Kidney (tissue), 22 donors: ENCODE measurements at regions of chr2 and their contacts with region 1.

Region 1: GRCh38 chr2:69717861-69718273 is 24.1 kb upstream of the ANXA4 start:
- DNase-seq: peak in 2 of 5 donors; percentile 21 to 45
- H3K4me3 ChIP-seq: no peak overlapping the region
- H3K27ac ChIP-seq: no peak overlapping the region
- H3K4me1 ChIP-seq: no peaks in the 10 kb centered on the region
- H3K27me3 ChIP-seq: no peaks in the 10 kb centered on the region
- CTCF ChIP-seq: no peak

Region 2: GRCh38 chr2:69499242-69499641 is 218.6 kb before region 1 on chr2:
- intact Hi-C with region 1: no loop called
- DNase-seq: no peak
- H3K4me3 ChIP-seq: no peak overlapping the region
- H3K27ac ChIP-seq: no peak overlapping the region
- H3K4me1 ChIP-seq: no peaks in the 10 kb centered on the region
- H3K27me3 ChIP-seq: no peaks in the 10 kb centered on the region
- CTCF ChIP-seq: no peak

Region 3: DNA sequence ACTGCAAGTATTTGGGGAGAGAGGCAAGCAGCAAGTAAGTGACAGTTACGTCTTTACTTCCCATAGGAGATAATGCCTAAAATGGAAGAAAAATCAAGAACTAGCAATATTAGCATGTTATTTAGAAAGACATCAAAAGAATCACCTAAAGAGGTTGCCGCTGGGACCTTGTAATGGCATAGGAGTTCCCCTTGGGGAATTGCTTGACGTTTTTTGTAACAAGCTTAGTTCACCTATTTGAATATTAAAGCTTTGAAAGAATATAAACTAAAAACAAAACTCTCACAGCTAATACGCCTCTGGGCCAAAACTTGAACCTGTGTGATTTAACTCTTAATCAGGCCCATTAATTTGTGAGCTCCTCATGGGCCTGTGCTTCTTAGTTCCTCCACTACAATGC is 163.3 kb before region 1 on chr2:
- intact Hi-C with region 1: no loop called
- DNase-seq: no peak
- H3K4me3 ChIP-seq: no peak overlapping the region
- H3K27ac ChIP-seq: no peak overlapping the region
- H3K4me1 ChIP-seq: peaks cover 0 to 15% (median 4%) of the 10 kb centered on the region in 3 donors
- H3K27me3 ChIP-seq: no peaks in the 10 kb centered on the region
- CTCF ChIP-seq: no peak

Region 4: DNA sequence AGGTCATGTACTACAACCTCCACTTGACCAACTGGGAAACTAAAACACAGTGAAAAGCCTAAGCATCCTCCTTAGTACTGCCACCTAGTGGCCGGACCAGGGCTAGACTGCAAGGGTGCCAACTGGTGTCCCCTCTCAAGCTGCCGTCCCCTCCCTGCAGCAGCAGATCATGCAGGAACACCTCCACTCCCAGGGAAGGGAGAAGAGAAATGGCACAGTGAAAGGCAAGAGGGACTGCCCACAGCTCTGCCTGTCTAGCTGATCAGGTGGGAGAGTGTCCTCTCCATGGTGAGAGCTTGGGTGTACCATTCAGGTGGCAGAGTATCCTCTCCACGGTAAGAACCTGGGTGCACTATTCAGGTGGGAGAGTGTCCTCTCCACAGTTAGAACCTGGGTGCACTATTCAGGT is 152.4 kb before region 1 on chr2:
- intact Hi-C with region 1: loop called (anchors 10 kb)
- DNase-seq: peak in 4 of 5 donors; percentile 36 to 62 (median 56)
- H3K4me3 ChIP-seq: no peak overlapping the region
- H3K27ac ChIP-seq: no peak overlapping the region
- H3K4me1 ChIP-seq: peaks cover 0 to 29% (median 13%) of the 10 kb centered on the region in 3 donors
- H3K27me3 ChIP-seq: no peaks in the 10 kb centered on the region
- CTCF ChIP-seq: peak; percentile 56